Activated T-helper 1 cell treated with anti-CD3 and anti-CD28 coated beads, Interleukin-12 subunit alpha, Interleukin-12 subunit beta, Interleukin-2, Interleukin-4 antibody, amounts not matched to agents 30 ng/mL and 10 ng/mL and 1 ng/mL, durations not matched to agents 14 hours and 24 hours and 36 hours (primary cell): ENCODE measurements at regions of chr7 and their contacts with region 1.

Region 1: DNA sequence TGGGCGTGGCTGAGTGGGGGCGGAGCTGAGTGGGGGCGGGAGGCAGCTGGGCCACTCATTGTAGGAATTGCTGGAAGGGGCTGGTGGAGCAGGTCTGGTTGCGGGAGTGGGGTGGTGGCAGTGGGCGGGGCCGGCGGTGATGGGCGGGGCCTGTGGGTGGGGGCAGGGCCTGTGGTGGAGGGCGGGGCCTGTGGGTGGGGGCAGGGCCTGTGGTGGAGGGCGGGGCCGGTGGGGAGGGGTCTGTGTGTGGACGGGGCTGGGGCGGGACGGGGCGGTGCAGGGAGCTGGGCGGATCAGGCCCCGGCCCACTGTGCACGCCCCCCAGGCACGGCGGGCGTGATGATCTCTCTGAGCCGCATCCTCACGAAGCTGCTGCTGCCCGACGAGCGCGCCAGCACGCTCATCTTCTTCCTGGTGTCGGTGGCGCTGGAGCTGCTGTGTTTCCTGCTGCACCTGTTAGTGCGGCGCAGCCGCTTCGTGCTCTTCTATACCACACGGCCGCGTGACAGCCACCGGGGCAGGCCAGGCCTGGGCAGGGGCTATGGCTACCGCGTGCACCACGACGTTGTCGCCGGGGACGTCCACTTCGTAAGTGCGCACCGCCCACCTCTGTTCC is 14.0 kb downstream of the SLC29A4 start:
- DNase-seq: peak; percentile 61
- H3K4me3 Mint-ChIP-seq: peak overlapping the region; percentile 78
- H3K27ac Mint-ChIP-seq: peak overlapping the region; percentile 34
- H3K4me1 Mint-ChIP-seq: peaks cover 13% of the 10 kb centered on the region
- H3K27me3 Mint-ChIP-seq: peaks cover 21% of the 10 kb centered on the region

Region 2: GRCh38 chr7:5172196-5172775 is 124.4 kb before region 1 on chr7:
- intact Hi-C with region 1: no loop called
- DNase-seq: no peak
- H3K4me3 Mint-ChIP-seq: no peak overlapping the region
- H3K27ac Mint-ChIP-seq: no peak overlapping the region
- H3K4me1 Mint-ChIP-seq: peaks cover 9% of the 10 kb centered on the region
- H3K27me3 Mint-ChIP-seq: peaks cover 6% of the 10 kb centered on the region

Region 3: GRCh38 chr7:5282543-5283316 is 14.0 kb before region 1 on chr7 and contains the start of gene SLC29A4:
- intact Hi-C with region 1: loop called (anchors 2 kb)
- DNase-seq: no peak
- H3K4me3 Mint-ChIP-seq: no peak within 1 kb of the TSS
- H3K27ac Mint-ChIP-seq: no peak within 1 kb of the TSS
- H3K4me1 Mint-ChIP-seq: no peaks in the 10 kb centered on the region
- H3K27me3 Mint-ChIP-seq: peaks cover 6% of the 10 kb centered on the region
- total RNA-seq, gene SLC29A4: 0.29 and 0.54 TPM in 2 replicates